GM10248 (cell line): ENCODE measurements at regions of chr7 and their contacts with region 1.

Region 1: DNA sequence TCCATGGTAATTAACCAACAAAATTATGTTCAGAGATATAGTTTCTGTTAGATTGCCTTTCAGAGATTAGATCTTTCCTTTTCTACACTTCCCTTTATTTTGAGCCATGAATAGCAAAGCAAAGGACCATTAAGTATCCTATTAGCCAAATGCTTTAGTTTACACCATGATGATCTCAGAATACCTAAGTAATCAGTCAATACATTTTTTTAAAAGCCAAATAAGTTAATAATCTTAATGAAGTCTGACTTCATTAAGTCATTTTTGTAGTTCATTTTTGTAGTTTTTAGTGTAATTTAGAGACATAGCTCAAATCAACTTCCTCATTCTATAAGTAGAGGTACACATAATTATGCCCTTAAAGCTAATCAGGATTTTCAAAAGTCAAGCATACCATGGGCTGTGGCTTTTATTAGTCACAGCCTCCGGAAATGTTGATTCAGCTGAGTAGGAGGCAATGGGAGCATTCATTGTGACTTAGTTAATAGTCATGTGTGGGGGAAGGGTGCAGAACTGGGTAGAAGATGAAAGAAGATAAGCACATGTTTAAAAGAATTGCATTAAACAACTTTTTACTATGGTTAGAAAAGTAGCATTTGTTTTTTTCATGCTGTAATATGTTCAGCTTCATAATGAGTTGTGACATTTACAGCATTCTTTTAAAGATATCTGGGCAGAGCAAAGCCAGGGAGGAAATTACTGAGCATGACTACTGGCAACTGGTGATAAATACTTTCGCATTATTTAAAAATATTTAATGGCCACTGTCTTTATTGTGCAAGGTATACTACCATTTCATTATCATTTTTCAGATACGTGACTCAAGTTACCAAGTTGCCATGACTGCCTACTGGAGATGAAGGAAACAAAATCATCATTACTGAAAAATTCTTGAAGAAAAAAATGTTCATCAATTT is 57.3 kb upstream of the CCDC71L start:
- DNase-seq: peak; percentile 43
- CTCF ChIP-seq: no peak

Region 2: DNA sequence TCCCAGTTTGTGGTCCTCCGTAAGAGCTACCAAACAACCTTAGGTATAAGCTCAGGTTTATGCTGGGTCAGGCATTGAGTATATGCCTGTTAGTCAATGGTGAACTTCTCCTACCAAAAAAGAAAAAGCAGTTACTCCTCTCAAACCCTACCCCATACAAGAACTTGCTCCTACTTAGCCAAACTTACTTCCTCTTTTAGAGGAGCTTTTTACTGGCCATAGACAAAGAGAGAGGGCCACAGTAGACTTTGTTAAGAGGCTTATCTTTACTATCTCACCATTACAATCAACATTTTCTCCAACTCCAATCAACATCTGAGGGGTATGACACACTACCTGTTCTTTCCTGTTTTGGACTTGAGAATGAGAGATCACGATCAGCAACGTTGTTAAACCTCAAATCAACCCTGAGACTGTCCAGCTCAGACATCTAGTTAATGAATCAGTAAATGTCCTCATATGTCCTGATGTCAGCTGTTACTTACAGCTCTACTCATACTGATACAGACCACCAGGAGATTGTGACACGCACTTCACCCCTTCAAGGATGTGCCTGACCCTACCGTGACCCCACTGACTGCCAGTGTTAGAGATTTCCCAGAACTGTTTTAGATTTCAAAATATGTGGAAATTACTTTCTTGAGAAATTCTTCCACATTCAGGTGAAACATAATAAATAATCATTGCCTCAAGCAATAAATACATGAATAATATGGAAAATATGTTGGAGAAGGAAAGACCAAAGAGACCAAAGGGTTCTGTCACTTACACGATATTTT is 38.9 kb before region 1 on chr7:
- CTCF ChIA-PET with region 1: no interaction called
- POLR2A ChIA-PET with region 1: no interaction called
- DNase-seq: peak; percentile 29
- CTCF ChIP-seq: no peak

Region 3: GRCh38 chr7:106731187-106731586 is 13.0 kb after region 1 on chr7:
- CTCF ChIA-PET with region 1: interaction called, 26 read pairs
- POLR2A ChIA-PET with region 1: no interaction called
- DNase-seq: peak; percentile 22
- CTCF ChIP-seq: no peak

Region 4: DNA sequence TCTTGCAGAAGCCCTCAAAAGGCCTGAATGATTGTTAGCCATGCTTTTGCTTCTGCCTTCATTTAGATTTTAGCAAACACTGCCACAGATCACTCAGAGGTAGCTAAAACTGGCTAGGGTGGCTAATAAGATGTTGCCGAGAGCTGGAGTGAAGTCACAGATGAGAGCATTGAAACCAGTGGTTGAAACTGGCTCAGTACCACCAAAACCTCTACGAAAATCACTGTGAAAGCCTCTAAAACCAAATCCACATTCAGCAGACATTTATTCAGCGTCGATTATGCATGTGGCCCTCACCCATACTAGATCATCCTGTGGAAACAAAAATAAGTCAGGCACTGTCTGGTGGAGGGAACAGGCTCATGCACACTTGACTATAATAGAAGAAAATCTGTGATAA is 197.7 kb after region 1 on chr7:
- CTCF ChIA-PET with region 1: no interaction called
- POLR2A ChIA-PET with region 1: no interaction called
- DNase-seq: peak; percentile 32
- CTCF ChIP-seq: no peak